Activated B cell treated with CpG ODN at 0.5 μM for 24 hours (primary cell): ENCODE measurements at regions of chr7 and their contacts with region 1.

Region 1: DNA sequence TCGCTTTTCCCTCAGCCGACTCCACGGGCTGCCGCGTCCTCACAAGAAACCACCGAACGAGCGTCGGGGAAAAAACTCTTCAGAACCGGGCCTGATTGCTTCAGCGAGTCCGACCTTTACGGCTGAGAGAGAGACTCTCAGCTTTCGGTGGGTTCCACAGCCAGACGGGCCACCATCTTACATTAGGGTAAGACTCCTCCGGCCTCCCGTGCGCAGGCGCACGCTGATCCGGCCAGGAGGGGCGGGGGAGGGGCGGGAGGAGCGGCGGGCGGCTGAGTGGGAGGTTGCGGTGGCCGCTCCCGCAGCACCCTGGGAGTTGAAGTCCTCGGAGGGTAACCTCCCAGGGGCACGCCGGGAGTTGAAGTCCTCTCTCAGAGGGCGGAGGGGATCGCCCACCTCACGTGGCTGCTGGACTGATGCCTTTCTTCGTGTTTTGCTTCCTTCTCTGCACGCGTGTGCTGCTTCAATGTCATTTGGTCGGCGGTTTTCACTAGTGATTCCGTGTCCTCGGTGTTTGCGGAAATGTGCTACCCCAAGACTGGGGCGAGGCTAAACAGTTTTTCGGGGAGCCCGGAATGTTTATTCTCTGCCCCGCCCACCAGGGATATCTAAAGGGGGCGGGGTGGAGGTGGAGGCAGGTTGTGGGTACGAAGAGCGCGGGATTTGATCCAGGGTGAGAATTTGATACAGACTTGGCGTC is at the start of gene CNOT4:
- DNase-seq: peak; percentile 87
- ATAC-seq: peak; percentile 96
- H3K4me3 Mint-ChIP-seq: no peak within 1 kb of the TSS
- H3K27ac Mint-ChIP-seq: no peak within 1 kb of the TSS
- H3K4me1 Mint-ChIP-seq: peaks cover 10% of the 10 kb centered on the region
- H3K27me3 Mint-ChIP-seq: no peaks in the 10 kb centered on the region
- CTCF ChIP-seq: no peak
- total RNA-seq, gene CNOT4: 34.4 and 36.8 TPM in 2 replicates

Region 2: DNA sequence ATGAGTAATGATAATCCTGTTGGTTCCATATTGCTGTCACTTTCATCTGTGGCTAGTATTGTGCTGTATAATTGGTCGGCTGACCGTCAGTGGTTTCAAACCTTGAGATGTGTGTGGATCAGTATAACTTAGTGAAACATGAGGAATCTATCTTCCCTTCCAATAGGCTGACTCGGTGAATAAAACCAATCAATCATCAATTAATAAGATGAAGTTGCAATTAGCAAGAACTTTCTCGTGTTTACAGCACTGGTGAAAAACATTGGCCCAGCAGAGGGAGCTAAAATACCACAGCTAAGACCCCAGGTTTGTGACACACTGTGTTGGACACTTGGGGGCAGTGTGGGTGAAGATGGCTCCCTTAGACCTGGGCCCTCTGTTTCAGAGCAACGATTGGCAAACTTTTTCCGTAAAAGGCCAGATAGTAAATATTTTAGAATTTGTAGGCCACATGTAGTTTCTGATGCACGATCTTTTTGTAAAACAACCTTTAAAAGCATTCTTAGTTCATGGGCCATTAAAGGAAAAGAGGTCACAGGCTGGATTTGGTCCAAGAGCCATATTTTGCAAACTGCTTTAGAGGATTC is 228.6 kb before region 1 on chr7:
- CTCF ChIA-PET with region 1: no interaction called
- POLR2A ChIA-PET with region 1: no interaction called
- intact Hi-C with region 1: loop called (anchors 1 kb)
- DNase-seq: peak; percentile 24
- ATAC-seq: peak; percentile 100
- H3K4me3 Mint-ChIP-seq: no peak overlapping the region
- H3K27ac Mint-ChIP-seq: no peak overlapping the region
- H3K4me1 Mint-ChIP-seq: peaks cover 10% of the 10 kb centered on the region
- H3K27me3 Mint-ChIP-seq: peaks cover 6% of the 10 kb centered on the region
- CTCF ChIP-seq: peak; percentile 98

Region 3: GRCh38 chr7:135414850-135415439 is 95.1 kb before region 1 on chr7:
- CTCF ChIA-PET with region 1: no interaction called
- POLR2A ChIA-PET with region 1: interaction called, 3 read pairs
- intact Hi-C with region 1: loop called (anchors 5 kb)
- DNase-seq: no peak
- ATAC-seq: no peak
- H3K4me3 Mint-ChIP-seq: no peak overlapping the region
- H3K27ac Mint-ChIP-seq: no peak overlapping the region
- H3K4me1 Mint-ChIP-seq: no peaks in the 10 kb centered on the region
- H3K27me3 Mint-ChIP-seq: no peaks in the 10 kb centered on the region
- CTCF ChIP-seq: no peak

Region 4: GRCh38 chr7:135480966-135481597 is 29.0 kb before region 1 on chr7:
- CTCF ChIA-PET with region 1: no interaction called
- POLR2A ChIA-PET with region 1: no interaction called
- intact Hi-C with region 1: no loop called
- DNase-seq: no peak
- ATAC-seq: no peak
- H3K4me3 Mint-ChIP-seq: no peak overlapping the region
- H3K27ac Mint-ChIP-seq: no peak overlapping the region
- H3K4me1 Mint-ChIP-seq: peaks cover 24% of the 10 kb centered on the region
- H3K27me3 Mint-ChIP-seq: no peaks in the 10 kb centered on the region
- CTCF ChIP-seq: no peak

Region 5: GRCh38 chr7:135662373-135663114 is 152.5 kb after region 1 on chr7 and contains the start of gene STMP1:
- CTCF ChIA-PET with region 1: no interaction called
- POLR2A ChIA-PET with region 1: no interaction called
- intact Hi-C with region 1: loop called (anchors 1 kb)
- DNase-seq: peak; percentile 96
- ATAC-seq: peak; percentile 98
- H3K4me3 Mint-ChIP-seq: peak within 1 kb of the TSS; percentile 91
- H3K27ac Mint-ChIP-seq: peak within 1 kb of the TSS; percentile 79
- H3K4me1 Mint-ChIP-seq: peaks cover 39% of the 10 kb centered on the region
- H3K27me3 Mint-ChIP-seq: no peaks in the 10 kb centered on the region
- CTCF ChIP-seq: no peak
- total RNA-seq, gene STMP1: 24.2 and 26.2 TPM in 2 replicates

Region 6: GRCh38 chr7:135811506-135811905 is 301.5 kb after region 1 on chr7:
- CTCF ChIA-PET with region 1: no interaction called
- POLR2A ChIA-PET with region 1: no interaction called
- intact Hi-C with region 1: no loop called
- DNase-seq: no peak
- ATAC-seq: no peak
- H3K4me3 Mint-ChIP-seq: no peak overlapping the region
- H3K27ac Mint-ChIP-seq: no peak overlapping the region
- H3K4me1 Mint-ChIP-seq: no peaks in the 10 kb centered on the region
- H3K27me3 Mint-ChIP-seq: peaks cover 8% of the 10 kb centered on the region
- CTCF ChIP-seq: no peak

Region 7: GRCh38 chr7:135911099-135911498 is 401.0 kb after region 1 on chr7:
- CTCF ChIA-PET with region 1: no interaction called
- POLR2A ChIA-PET with region 1: no interaction called
- intact Hi-C with region 1: no loop called
- DNase-seq: no peak
- ATAC-seq: no peak
- H3K4me3 Mint-ChIP-seq: no peak overlapping the region
- H3K27ac Mint-ChIP-seq: no peak overlapping the region
- H3K4me1 Mint-ChIP-seq: no peaks in the 10 kb centered on the region
- H3K27me3 Mint-ChIP-seq: no peaks in the 10 kb centered on the region
- CTCF ChIP-seq: no peak